Activated CD4-positive, alpha-beta T cell treated with anti-CD3 and anti-CD28 coated beads, Interleukin-2, amount 10 ng/mL, durations not matched to agents 24 days and 14 days (primary cell): ENCODE measurements at regions of chr2 and their contacts with region 1.

Region 1: GRCh38 chr2:205612636-205613035 is 69.7 kb upstream of the NRP2 start:
- DNase-seq: peak; percentile 80
- H3K4me3 Mint-ChIP-seq: peak overlapping the region; percentile 50
- H3K27ac Mint-ChIP-seq: peak overlapping the region; percentile 84
- H3K4me1 Mint-ChIP-seq: peaks cover 45% of the 10 kb centered on the region
- H3K27me3 Mint-ChIP-seq: peaks cover 5% of the 10 kb centered on the region

Region 2: DNA sequence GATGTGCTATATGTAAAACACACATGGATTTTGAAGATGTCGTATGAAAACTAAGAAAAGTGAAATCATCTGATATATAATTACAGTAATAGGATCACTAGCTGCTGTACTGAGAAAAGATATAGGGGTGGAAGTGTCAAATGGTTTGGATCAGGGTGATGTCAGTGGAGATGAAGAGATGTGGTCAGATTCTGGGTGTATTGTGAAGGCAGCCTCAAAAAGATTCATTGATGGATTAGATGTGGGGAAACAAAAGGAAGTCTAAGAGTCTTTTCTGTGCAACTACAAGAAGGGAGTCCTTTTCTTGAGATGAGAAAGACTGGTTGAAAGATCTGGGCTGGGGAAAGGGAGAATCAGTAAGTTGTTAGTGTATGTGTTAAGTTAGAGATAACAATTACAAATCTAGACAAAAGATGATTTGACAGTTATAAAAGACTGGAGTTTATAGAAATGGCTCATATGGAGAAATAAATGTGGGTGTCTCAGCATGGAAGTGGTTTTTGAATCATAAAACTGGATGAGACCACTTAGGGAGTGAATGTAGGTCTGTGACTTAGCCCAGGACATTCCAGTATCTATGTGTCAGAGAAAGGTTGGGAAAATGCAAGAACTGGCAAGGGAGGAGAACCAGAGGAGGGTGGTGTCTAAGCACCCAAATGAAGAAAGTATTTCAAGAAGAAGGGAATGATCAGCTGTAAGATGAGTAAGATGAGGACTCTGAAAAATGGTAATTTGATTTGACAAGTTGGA is 720.0 kb before region 1 on chr2:
- intact Hi-C with region 1: loop called (anchors 5 kb)
- DNase-seq: no peak
- H3K4me3 Mint-ChIP-seq: no peak overlapping the region
- H3K27ac Mint-ChIP-seq: no peak overlapping the region
- H3K4me1 Mint-ChIP-seq: peaks cover 10% of the 10 kb centered on the region
- H3K27me3 Mint-ChIP-seq: no peaks in the 10 kb centered on the region

Region 3: DNA sequence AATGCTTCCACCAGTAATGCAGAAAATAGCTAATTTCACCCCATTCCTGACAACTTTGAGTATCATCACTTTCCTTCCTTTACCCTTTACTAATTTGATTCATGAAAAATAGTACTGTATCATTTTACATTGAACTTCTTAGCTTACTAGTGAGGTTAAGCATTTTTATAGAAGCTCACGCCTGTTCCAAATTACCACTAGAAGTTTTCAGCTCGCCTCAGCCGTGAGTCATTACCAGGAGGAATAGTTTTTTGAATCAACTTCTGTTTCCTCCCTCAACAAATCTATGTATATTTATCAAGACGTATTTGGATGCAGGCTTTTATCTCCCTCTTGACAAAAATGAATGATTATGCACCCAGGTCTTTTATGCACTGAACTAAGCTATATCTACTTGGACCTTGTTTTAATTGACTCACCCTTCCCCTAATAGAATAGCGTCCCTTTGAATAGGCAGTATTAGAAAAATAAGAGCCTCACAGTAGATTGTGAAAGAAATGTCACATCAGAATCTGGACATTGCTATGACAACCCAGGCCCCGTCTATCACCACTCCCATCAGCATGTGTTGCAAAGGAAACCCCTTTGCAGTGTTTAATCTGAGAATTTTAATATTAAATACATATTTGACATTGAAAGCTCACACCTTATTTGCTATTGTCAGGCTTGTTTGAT is 137.8 kb before region 1 on chr2:
- intact Hi-C with region 1: loop called (anchors 1 kb)
- DNase-seq: no peak
- H3K4me3 Mint-ChIP-seq: no peak overlapping the region
- H3K27ac Mint-ChIP-seq: no peak overlapping the region
- H3K4me1 Mint-ChIP-seq: peaks cover 3% of the 10 kb centered on the region
- H3K27me3 Mint-ChIP-seq: peaks cover 43% of the 10 kb centered on the region

Region 4: GRCh38 chr2:205636549-205637319 is 24.1 kb after region 1 on chr2:
- intact Hi-C with region 1: loop called (anchors 2 kb)
- DNase-seq: peak; percentile 61
- H3K4me3 Mint-ChIP-seq: no peak overlapping the region
- H3K27ac Mint-ChIP-seq: peak overlapping the region; percentile 79
- H3K4me1 Mint-ChIP-seq: peaks cover 24% of the 10 kb centered on the region
- H3K27me3 Mint-ChIP-seq: no peaks in the 10 kb centered on the region

Region 5: GRCh38 chr2:205714058-205714776 is 101.6 kb after region 1 on chr2:
- intact Hi-C with region 1: loop called (anchors 2 kb)
- DNase-seq: peak; percentile 60
- H3K4me3 Mint-ChIP-seq: peak overlapping the region; percentile 32
- H3K27ac Mint-ChIP-seq: peak overlapping the region; percentile 67
- H3K4me1 Mint-ChIP-seq: peaks cover 62% of the 10 kb centered on the region
- H3K27me3 Mint-ChIP-seq: no peaks in the 10 kb centered on the region

Region 6: GRCh38 chr2:205766779-205767359 is 154.2 kb after region 1 on chr2:
- intact Hi-C with region 1: no loop called
- DNase-seq: peak; percentile 84
- H3K4me3 Mint-ChIP-seq: no peak overlapping the region
- H3K27ac Mint-ChIP-seq: no peak overlapping the region
- H3K4me1 Mint-ChIP-seq: peaks cover 4% of the 10 kb centered on the region
- H3K27me3 Mint-ChIP-seq: peaks cover 21% of the 10 kb centered on the region

Region 7: DNA sequence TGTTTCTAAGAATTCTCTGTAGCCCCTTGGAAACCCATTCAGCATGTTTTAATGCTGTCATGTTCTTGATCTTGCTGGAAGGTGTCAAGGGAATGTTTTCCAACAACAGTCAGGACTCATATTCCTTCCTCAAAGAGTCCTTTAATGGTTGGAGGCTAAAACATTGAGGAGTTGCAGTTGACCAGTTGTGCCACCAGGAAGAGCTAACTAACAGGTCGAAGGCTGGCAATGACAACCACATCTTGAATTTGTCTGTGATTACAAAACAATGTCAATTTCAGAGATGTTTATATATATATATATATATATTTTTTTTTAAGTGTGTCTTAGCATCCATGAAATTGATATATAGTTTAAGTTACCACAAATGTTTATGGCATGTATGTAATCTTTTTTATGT is 321.8 kb after region 1 on chr2:
- intact Hi-C with region 1: no loop called
- DNase-seq: no peak
- H3K4me3 Mint-ChIP-seq: no peak overlapping the region
- H3K27ac Mint-ChIP-seq: no peak overlapping the region
- H3K4me1 Mint-ChIP-seq: no peaks in the 10 kb centered on the region
- H3K27me3 Mint-ChIP-seq: peaks cover 3% of the 10 kb centered on the region